ENCODE measurements at regions of chr7 and their contacts with region 1.

Region 1: GRCh38 chr7:94530109-94530508 is 20.5 kb downstream of the CASD1 start:
- DNase-seq: no peak

Region 2: DNA sequence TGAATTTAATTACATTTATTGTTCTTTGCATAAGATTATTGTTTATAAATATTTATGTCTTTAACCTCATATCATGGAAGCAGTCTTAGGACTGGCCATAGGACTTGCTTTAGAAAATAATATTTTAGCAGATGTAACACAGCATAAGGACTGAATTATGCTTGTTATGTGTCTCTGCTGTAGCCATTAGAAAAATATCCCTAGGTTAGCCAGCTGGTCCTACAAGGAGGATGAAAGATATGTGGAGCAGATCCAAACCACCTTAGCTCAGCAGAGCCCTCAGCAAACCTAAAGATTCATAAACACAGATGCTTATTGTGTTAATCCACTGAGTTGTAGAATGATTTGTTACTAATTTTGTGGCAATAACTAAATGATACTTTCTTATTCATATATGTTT is 301.4 kb before region 1 on chr7:
- intact Hi-C with region 1: no loop called
- DNase-seq: no peak

Region 3: GRCh38 chr7:94276795-94277194 is 253.3 kb before region 1 on chr7:
- intact Hi-C with region 1: no loop called
- DNase-seq: no peak

Region 4: DNA sequence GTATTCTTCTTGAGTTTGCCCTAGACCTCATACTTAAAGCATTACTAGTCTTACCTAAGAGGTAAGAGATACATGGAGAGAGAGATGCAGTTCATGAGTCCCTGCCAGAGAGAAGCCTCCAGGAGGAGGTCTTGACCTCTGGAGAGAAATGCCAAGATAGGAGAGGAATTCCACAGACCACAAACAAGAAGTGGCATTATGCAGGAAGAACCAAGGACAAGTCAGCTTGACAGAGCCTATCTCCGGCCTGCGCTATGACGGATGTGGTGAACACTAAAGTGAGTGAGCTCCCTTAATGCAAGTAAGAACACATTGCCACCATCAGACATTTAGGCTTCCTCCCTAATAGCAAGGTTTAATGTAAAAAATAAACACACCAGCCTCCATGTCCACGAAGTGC is 163.3 kb before region 1 on chr7:
- intact Hi-C with region 1: no loop called
- DNase-seq: no peak

Region 5: DNA sequence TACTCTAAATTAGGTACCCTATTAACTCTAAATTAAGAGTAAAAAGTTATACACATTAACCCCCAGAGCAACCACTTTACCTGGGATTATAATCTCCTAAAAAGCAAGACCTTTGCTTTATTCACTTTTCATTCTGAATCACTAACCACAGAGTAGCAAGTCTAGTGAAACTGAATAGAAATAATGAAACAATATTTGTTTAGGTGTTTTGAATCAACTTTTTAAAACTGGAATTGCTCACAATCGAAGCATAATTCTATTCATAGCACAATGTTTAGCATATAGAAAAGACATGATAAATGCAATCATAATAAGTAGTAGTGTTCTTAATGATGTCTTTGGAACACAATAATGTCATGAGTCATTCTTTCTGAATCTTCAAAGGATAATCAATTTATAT is 57.5 kb before region 1 on chr7:
- intact Hi-C with region 1: loop called (anchors 10 kb)
- DNase-seq: no peak